ENCODE measurements at regions of chr3 and their contacts with region 1.

Region 1: DNA sequence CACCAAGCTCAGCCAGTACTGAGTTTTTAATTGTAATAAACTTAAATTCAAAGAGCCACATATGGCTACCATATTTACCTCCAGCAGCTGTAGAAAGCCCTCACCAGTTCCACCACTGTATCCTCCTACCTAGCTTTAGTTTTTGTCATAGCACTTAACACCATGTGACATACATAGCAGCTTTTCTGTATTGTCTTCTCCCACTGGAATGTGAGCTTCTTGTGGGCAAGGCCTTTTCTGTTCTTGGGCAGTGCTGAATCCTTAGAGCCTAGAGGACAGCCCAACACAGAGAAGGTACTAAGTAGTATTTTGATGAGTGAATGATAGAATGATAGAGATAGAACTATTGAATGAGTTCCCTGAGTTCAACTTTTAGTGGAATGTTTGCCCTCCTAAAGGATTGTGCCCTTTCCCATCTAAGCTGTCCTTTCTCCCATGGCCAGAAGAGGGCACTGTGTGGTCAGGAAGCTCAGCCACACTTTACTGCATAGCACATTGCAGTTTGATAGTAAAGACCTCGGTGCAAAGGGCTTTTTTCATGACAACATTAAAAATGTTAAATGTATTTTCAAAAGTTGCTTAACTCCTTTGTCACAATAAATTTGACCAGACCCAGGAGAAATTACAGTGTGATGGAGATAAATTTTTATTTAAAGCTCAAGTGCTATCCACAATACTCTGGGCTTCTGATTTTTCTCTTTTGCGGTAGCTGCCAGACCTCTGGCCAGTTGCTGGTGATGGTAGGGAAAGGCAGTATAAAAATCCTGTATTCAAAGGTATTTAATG is 115.8 kb downstream of the GHSR start:
- DNase-seq: peak; percentile 46 to 59 (median 58)
- H3K4me3 ChIP-seq: no peak overlapping the region
- H3K27ac ChIP-seq: no peak overlapping the region
- H3K4me1 ChIP-seq: peaks cover 0 to 3% (median 0%) of the 10 kb centered on the region in 4 experiments
- H3K27me3 ChIP-seq: no peaks in the 10 kb centered on the region

Region 2: GRCh38 chr3:172194702-172195406 is 137.6 kb before region 1 on chr3:
- CTCF ChIA-PET with region 1: no interaction called
- POLR2A ChIA-PET with region 1: no interaction called
- DNase-seq: peak; percentile 42 to 85 (median 81)
- H3K4me3 ChIP-seq: no peak overlapping the region
- H3K27ac ChIP-seq: peak overlapping the region in 1 of 2 experiments; percentile 34
- H3K4me1 ChIP-seq: peaks cover 0 to 7% (median 5%) of the 10 kb centered on the region in 4 experiments
- H3K27me3 ChIP-seq: no peaks in the 10 kb centered on the region

Region 3: DNA sequence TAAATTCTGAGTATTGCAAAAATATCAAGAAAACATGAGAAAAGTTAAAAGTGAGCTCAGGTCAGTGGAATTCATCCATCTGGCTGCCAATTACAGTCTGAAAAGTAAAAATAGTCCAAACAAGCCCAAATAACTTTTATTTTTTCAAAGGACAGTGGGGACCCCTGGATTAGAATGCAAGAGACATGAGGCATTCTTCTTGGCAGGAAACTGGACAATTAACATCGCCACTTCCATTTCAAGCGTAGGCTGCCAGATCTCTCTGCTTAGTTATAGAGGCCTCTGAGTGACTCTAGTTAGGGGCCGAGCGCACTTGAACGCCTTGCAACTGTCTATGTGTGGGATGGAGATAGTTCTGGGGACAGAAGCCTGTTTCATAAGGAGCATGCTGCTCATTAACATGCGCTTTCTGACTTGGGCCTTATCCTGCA is 73.3 kb before region 1 on chr3:
- CTCF ChIA-PET with region 1: no interaction called
- POLR2A ChIA-PET with region 1: no interaction called
- DNase-seq: no peak
- H3K4me3 ChIP-seq: no peak overlapping the region
- H3K27ac ChIP-seq: no peak overlapping the region
- H3K4me1 ChIP-seq: no peaks in the 10 kb centered on the region
- H3K27me3 ChIP-seq: no peaks in the 10 kb centered on the region

Region 4: GRCh38 chr3:172305974-172306373 is 26.5 kb before region 1 on chr3:
- CTCF ChIA-PET with region 1: no interaction called
- POLR2A ChIA-PET with region 1: no interaction called
- DNase-seq: no peak
- H3K4me3 ChIP-seq: no peak overlapping the region
- H3K27ac ChIP-seq: no peak overlapping the region
- H3K4me1 ChIP-seq: no peaks in the 10 kb centered on the region
- H3K27me3 ChIP-seq: no peaks in the 10 kb centered on the region

Region 5: GRCh38 chr3:172317984-172318383 is 14.5 kb before region 1 on chr3:
- CTCF ChIA-PET with region 1: interaction called, 35 read pairs
- POLR2A ChIA-PET with region 1: no interaction called
- DNase-seq: peak; percentile 53 to 84 (median 74)
- H3K4me3 ChIP-seq: peak overlapping the region in 2 of 7 experiments; percentile 13 to 36
- H3K27ac ChIP-seq: peak overlapping the region; percentile 53 to 73
- H3K4me1 ChIP-seq: peaks cover 5 to 38% (median 21%) of the 10 kb centered on the region in 4 experiments
- H3K27me3 ChIP-seq: no peaks in the 10 kb centered on the region

Region 6: GRCh38 chr3:172666873-172667694 is 334.6 kb after region 1 on chr3:
- CTCF ChIA-PET with region 1: interaction called, 42 read pairs
- POLR2A ChIA-PET with region 1: no interaction called
- DNase-seq: peak; percentile 72 to 90 (median 88)
- H3K4me3 ChIP-seq: no peak overlapping the region
- H3K27ac ChIP-seq: no peak overlapping the region
- H3K4me1 ChIP-seq: peaks cover 0 to 5% (median 2%) of the 10 kb centered on the region in 4 experiments
- H3K27me3 ChIP-seq: no peaks in the 10 kb centered on the region